Astrocyte of the cerebellum (primary cell): ENCODE measurements at regions of chr1 and their contacts with region 1.

Region 1: GRCh38 chr1:89994805-89995597 is at the start of gene ZNF326:
- DNase-seq: peak; percentile 95
- H3K4me3 ChIP-seq: peak within 1 kb of the TSS; percentile 81
- CTCF ChIP-seq: no peak

Region 2: DNA sequence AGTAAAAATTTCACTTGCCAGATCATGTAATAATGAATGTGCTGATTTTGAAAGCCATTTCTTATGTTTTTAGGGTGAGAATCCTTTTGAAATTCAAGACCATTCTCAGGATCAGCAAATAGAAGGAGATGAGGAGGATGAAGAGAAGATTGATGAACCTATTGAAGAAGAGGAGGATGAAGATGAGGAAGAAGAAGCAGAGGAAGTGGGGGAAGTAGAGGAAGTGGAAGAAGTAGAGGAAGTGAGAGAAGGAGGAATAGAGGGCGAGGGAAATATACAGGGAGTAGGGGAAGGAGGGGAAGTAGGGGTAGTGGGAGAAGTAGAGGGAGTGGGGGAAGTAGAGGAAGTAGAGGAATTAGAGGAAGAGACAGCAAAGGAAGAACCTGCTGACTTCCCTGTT is 32.3 kb after region 1 on chr1:
- in situ Hi-C with region 1: loop called (anchors 5 kb)
- DNase-seq: no peak
- H3K4me3 ChIP-seq: no peak overlapping the region
- CTCF ChIP-seq: no peak